ENCODE measurements at regions of chr14 and their contacts with region 1.

Region 1: DNA sequence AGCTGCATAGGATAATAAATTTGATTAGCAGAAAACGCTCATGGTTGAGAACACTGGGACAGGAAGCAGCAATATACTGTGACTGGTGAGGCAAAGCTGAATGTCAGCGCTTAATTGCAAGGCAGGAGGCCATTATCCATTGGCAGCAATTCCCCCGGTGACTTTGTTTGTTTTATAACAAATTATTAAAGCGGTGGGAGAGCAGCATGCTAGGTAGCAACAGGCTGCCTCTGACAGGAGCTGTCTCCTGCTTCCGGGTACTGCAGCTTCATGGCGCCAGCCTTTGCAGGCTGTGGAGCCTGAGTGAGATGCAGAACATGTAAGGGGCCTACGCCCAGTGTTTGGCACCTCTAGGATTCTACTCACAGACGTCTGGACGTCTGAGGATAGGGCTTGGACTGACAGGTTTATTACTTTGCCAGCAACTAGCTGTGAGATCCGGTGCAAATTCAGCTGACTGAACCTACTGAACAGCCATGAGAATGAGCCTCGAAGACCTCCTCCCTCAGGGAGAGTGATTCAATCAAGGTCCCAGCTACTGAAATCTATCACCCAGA is 82.1 kb upstream of the SSTR1 start:
- DNase-seq: peak; percentile 92
- H3K4me3 ChIP-seq: peak overlapping the region; percentile 26
- H3K27ac ChIP-seq: peak overlapping the region; percentile 97
- H3K4me1 ChIP-seq: peaks cover 97% of the 10 kb centered on the region
- CTCF ChIP-seq: no peak

Region 2: GRCh38 chr14:38137005-38137404 is 11.4 kb after region 1 on chr14:
- CTCF ChIA-PET with region 1: interaction called, 4 read pairs
- POLR2A ChIA-PET with region 1: interaction called, 91 read pairs
- intact Hi-C with region 1: no loop called
- DNase-seq: no peak
- H3K4me3 ChIP-seq: no peak overlapping the region
- H3K27ac ChIP-seq: no peak overlapping the region
- H3K4me1 ChIP-seq: peaks cover 16% of the 10 kb centered on the region
- CTCF ChIP-seq: no peak

Region 3: GRCh38 chr14:38158468-38158867 is 32.9 kb after region 1 on chr14:
- CTCF ChIA-PET with region 1: no interaction called
- POLR2A ChIA-PET with region 1: interaction called, 10 read pairs
- intact Hi-C with region 1: no loop called
- DNase-seq: no peak
- H3K4me3 ChIP-seq: no peak overlapping the region
- H3K27ac ChIP-seq: no peak overlapping the region
- H3K4me1 ChIP-seq: peaks cover 3% of the 10 kb centered on the region
- CTCF ChIP-seq: no peak

Region 4: GRCh38 chr14:38233218-38233617 is 107.7 kb after region 1 on chr14:
- CTCF ChIA-PET with region 1: no interaction called
- POLR2A ChIA-PET with region 1: interaction called, 3 read pairs
- intact Hi-C with region 1: loop called (anchors 1 kb)
- DNase-seq: peak; percentile 85
- H3K4me3 ChIP-seq: no peak overlapping the region
- H3K27ac ChIP-seq: peak overlapping the region; percentile 91
- H3K4me1 ChIP-seq: peaks cover 30% of the 10 kb centered on the region
- CTCF ChIP-seq: no peak

Region 5: GRCh38 chr14:38290601-38291190 is 165.1 kb after region 1 on chr14:
- CTCF ChIA-PET with region 1: no interaction called
- POLR2A ChIA-PET with region 1: no interaction called
- intact Hi-C with region 1: no loop called
- DNase-seq: no peak
- H3K4me3 ChIP-seq: no peak overlapping the region
- H3K27ac ChIP-seq: no peak overlapping the region
- H3K4me1 ChIP-seq: no peaks in the 10 kb centered on the region
- CTCF ChIP-seq: no peak

Region 6: GRCh38 chr14:38762845-38763244 is 637.3 kb after region 1 on chr14:
- CTCF ChIA-PET with region 1: no interaction called
- POLR2A ChIA-PET with region 1: no interaction called
- intact Hi-C with region 1: no loop called
- DNase-seq: no peak
- H3K4me3 ChIP-seq: no peak overlapping the region
- H3K27ac ChIP-seq: no peak overlapping the region
- H3K4me1 ChIP-seq: no peaks in the 10 kb centered on the region
- CTCF ChIP-seq: no peak

Region 7: DNA sequence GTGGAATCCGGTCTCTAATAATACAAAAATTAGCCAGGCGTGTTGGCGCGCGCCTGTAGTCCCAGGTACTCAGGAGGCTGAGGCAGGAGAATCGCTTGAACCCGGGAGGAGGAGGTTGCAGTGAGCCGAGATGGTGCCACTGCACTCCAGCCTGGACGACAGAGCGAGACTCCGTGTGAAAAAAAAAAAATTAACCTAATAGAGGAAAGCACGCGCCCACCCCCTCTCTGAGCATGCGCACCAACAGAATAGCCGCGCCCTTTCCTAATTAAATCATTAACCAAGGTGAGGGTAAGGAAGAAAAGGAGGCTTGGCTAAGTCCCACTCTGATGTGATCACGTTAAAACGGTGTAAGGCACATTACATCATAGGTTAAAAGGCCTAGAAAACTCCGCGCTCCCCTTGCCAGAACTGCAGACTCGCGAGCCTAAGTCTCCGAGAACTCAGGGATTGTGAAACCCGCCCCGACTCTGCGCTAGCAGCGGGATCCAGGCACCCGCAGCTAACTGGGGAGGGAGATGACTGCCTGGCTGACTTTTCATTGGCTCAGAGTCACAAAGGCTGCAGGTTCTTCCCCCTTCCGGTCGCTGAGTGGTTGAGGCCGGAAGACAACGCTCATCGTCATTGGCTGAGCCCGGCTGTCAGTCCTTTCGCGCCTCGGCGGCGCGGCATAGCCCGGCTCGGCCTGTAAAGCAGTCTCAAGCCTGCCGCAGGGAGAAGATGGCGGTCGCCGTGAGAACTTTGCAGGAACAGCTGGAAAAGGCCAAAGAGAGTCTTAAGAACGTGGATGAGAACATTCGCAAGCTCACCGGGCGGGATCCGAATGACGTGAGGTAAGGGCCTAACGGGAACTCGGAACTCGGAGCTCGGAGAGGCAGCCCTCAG is 1049.2 kb after region 1 on chr14 and contains the start of gene PNN:
- CTCF ChIA-PET with region 1: no interaction called
- POLR2A ChIA-PET with region 1: interaction called, 3 read pairs
- intact Hi-C with region 1: loop called (anchors 10 kb)
- DNase-seq: peak; percentile 99
- H3K4me3 ChIP-seq: peak within 1 kb of the TSS; percentile 98
- H3K27ac ChIP-seq: peak within 1 kb of the TSS; percentile 93
- H3K4me1 ChIP-seq: peaks cover 41% of the 10 kb centered on the region
- CTCF ChIP-seq: no peak
- total RNA-seq, gene PNN: 93.5 and 137 TPM in 2 replicates

Measured in OCI-LY7 (cell line).